H1 (cell line): ENCODE measurements at regions of chr3 and their contacts with region 1.

Region 1: DNA sequence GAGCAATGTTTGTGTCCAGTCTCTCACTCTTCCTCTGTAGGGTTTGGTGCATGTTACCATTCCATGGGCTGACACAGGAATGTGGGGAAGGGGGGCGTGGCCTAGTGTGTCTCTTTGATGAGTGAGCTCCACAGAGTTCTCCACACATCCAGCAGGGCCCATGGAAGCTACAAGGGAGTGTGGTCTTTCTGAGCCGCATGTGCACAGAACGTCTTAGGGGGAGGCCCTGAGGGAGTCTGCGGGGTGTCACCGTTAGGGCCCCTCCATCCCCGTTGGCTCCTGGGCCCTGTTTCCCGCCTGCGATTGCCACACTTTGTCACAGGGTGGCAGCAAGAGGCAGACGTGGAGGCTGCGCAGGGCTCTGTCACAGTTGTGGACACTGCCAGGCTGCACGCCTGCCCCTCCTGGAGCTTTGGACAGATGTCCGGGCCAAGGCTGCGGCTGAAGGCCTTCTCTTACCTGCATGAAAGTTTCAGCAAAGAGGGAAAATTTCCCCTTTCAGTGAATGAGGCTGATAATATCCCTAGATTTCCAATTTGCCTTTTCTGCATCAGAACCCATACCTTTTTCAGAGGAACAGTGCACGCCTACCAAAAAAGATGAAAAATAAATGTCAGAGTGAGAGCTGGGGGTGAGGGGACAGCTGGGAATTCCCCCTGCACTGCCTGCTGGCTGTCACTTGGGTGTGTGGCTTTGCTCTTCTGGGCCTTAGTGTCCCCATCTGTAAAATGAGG is 24.3 kb downstream of the CACNA2D3 start:
- DNase-seq: peak in 1 of 2 experiments; percentile 83
- H3K4me3 ChIP-seq: no peak overlapping the region
- H3K27ac ChIP-seq: no peak overlapping the region
- H3K4me1 ChIP-seq: peaks cover 0 to 3% (median 0%) of the 10 kb centered on the region in 4 experiments; a peak in 2 of 7 replicates
- H3K27me3 ChIP-seq: no peaks in the 10 kb centered on the region
- CTCF ChIP-seq: peak; percentile 94 to 96 (median 96)
- EP300 ChIP-seq: no peak
- POLR2A ChIP-seq: no peak
- RAD21 ChIP-seq: peak; percentile 98

Region 2: GRCh38 chr3:54134713-54135112 is 12.0 kb before region 1 on chr3:
- CTCF ChIA-PET with region 1: interaction called, 27 read pairs
- POLR2A ChIA-PET with region 1: no interaction called
- DNase-seq: no peak
- H3K4me3 ChIP-seq: no peak overlapping the region
- H3K27ac ChIP-seq: no peak overlapping the region
- H3K4me1 ChIP-seq: peaks cover 0 to 7% (median 3%) of the 10 kb centered on the region in 4 experiments; a peak in 2 of 7 replicates
- H3K27me3 ChIP-seq: no peaks in the 10 kb centered on the region
- CTCF ChIP-seq: peak in 1 of 3 experiments; percentile 0; a peak in 1 of 4 replicates
- EP300 ChIP-seq: no peak
- POLR2A ChIP-seq: no peak
- RAD21 ChIP-seq: no peak

Region 3: DNA sequence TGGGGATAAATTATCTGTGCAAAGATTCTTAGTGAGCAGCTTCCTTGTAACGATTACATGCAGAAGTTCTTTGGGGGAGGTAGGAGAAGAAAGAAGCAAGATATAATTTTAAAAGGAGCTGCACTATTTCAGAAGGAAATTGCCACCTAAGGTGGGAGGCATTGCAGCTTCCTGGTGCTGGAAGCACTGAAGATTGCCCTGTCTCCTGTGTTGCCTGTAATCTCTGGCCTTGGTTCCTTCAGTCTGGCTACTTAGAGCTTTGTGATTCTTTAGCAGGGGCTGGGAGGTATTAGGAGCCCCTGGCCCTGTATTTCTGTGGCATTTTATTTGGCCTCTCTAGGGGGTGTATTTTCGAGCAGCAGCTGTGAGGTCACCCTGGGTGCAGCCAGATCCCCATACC is 11.2 kb after region 1 on chr3:
- CTCF ChIA-PET with region 1: interaction called, 19 read pairs
- POLR2A ChIA-PET with region 1: no interaction called
- DNase-seq: no peak
- H3K4me3 ChIP-seq: no peak overlapping the region
- H3K27ac ChIP-seq: no peak overlapping the region
- H3K4me1 ChIP-seq: peaks cover 0 to 4% (median 2%) of the 10 kb centered on the region in 4 experiments; a peak in 4 of 7 replicates
- H3K27me3 ChIP-seq: peaks cover 0 to 2% (median 0%) of the 10 kb centered on the region in 4 experiments; a peak in 1 of 7 replicates
- CTCF ChIP-seq: no peak
- EP300 ChIP-seq: no peak
- POLR2A ChIP-seq: no peak
- RAD21 ChIP-seq: no peak

Region 4: DNA sequence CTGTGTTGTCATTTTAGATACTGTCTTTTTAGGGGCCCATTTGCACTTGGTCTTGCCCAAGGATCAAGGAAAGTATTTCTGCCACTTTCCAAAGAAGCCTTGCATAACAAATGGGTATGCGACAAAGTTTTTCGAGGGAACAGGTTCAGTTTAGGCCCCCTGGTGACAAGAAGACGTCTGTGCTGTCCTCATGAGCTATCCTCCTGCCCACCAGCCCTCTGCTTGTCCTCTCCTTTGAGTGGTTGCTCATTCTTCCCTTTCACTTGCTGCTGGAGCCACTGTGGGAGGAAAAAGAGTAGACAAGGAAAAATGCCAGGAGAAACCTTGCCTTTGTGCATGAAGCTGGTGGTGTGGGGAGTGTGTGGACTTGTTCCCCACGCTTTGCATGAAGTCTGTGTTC is 147.5 kb after region 1 on chr3:
- CTCF ChIA-PET with region 1: interaction called, 10 read pairs
- POLR2A ChIA-PET with region 1: no interaction called
- DNase-seq: no peak
- H3K4me3 ChIP-seq: no peak overlapping the region
- H3K27ac ChIP-seq: no peak overlapping the region
- H3K4me1 ChIP-seq: peaks cover 0 to 10% (median 3%) of the 10 kb centered on the region in 4 experiments; a peak in 4 of 7 replicates
- H3K27me3 ChIP-seq: peaks cover 0 to 2% (median 0%) of the 10 kb centered on the region in 4 experiments; a peak in 1 of 7 replicates
- CTCF ChIP-seq: peak in 2 of 3 experiments; percentile 34 to 38; a peak in 2 of 4 replicates
- EP300 ChIP-seq: no peak
- POLR2A ChIP-seq: no peak
- RAD21 ChIP-seq: peak; percentile 25 to 42; a peak in 3 of 4 replicates

Region 5: GRCh38 chr3:54358327-54358726 is 211.7 kb after region 1 on chr3:
- CTCF ChIA-PET with region 1: interaction called, 28 read pairs
- POLR2A ChIA-PET with region 1: no interaction called
- DNase-seq: no peak
- H3K4me3 ChIP-seq: no peak overlapping the region
- H3K27ac ChIP-seq: no peak overlapping the region
- H3K4me1 ChIP-seq: peaks cover 0 to 2% (median 0%) of the 10 kb centered on the region in 4 experiments; a peak in 2 of 7 replicates
- H3K27me3 ChIP-seq: no peaks in the 10 kb centered on the region
- CTCF ChIP-seq: no peak
- EP300 ChIP-seq: no peak
- POLR2A ChIP-seq: no peak
- RAD21 ChIP-seq: no peak

Region 6: DNA sequence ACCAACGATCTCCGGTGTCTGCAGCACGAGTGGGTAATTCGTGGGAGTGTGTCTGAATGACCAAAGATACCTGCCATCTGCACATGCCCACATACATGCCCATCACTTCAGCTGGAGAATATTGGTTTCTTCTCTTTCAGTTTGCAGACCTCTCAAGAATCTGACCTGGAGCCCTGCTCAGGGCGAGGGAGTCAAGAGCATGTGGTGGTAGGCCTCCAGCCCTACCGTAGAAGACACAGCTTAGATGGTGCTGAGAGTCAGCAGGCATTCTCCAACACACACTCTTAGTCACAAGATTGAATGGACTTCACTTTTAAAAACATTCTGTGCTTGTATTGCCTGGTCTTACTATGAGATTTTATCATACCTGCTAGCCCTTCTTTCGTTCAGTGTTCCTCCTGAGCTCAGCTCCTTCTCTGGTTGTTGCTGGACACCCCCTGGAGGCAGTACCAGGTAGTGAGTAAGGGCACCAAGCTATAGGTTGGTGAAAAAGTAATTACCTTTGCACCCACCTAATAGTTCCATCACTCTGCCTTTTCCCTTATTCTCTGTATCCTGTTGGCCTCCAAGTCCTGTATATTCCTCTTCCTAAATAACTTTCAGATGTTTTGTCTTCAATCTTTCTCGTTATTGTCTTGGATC is 227.7 kb after region 1 on chr3:
- CTCF ChIA-PET with region 1: interaction called, 46 read pairs
- POLR2A ChIA-PET with region 1: no interaction called
- DNase-seq: peak in 1 of 2 experiments; percentile 55
- H3K4me3 ChIP-seq: no peak overlapping the region
- H3K27ac ChIP-seq: no peak overlapping the region
- H3K4me1 ChIP-seq: no peaks in the 10 kb centered on the region
- H3K27me3 ChIP-seq: no peaks in the 10 kb centered on the region
- CTCF ChIP-seq: peak; percentile 61 to 78 (median 73)
- EP300 ChIP-seq: no peak
- POLR2A ChIP-seq: no peak
- RAD21 ChIP-seq: peak; percentile 87 to 88

Region 7: DNA sequence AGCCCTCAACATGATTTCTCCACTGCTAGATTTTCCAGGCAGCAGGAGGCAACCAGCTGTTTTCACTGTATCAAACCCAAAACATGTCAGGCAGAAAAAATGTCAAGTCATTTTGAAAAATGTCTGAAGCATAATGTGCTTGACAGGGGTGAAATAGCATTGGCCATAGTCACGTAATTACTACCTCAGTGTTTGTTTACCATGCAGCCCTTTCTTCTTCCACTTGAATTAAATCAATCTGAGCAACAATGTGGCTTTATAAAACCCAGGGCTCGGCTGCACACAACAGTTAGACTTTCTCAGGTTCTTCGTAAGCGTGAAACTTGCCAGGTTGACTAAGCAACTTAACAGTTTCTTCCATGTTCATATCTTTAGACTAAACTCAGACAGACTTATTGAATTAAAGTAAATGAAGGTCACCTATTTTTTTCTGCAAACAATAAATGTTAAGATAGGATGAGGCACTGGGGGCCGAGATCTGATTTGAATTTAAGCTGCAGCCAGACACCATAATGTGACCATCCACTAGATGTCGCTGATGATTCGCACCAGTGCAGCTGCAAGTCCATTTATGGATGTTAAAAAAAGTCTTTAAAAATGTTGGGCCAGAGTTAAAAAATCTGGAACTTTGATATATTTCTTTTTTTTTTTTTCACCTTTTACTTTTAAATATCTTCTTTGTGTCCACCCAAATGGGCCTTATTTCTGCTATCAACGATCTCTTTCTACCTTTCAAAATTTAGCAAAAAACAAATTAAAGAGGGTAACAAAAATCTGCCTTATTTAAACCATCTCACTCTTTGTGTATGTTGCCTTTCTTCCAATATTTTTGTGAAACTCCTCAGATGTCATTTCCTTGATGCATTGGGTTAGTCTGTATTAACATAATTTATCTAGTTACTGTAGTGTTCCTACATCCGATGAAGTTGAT is 281.5 kb after region 1 on chr3:
- CTCF ChIA-PET with region 1: interaction called, 14 read pairs
- POLR2A ChIA-PET with region 1: no interaction called
- DNase-seq: peak; percentile 43 to 73
- H3K4me3 ChIP-seq: no peak overlapping the region
- H3K27ac ChIP-seq: no peak overlapping the region
- H3K4me1 ChIP-seq: peaks cover 0 to 4% (median 3%) of the 10 kb centered on the region in 4 experiments; a peak in 3 of 7 replicates
- H3K27me3 ChIP-seq: no peaks in the 10 kb centered on the region
- CTCF ChIP-seq: peak; percentile 63 to 76 (median 70)
- EP300 ChIP-seq: no peak
- POLR2A ChIP-seq: no peak
- RAD21 ChIP-seq: peak; percentile 90 to 91